ENCODE measurements at regions of chr10 and their contacts with region 1.

Region 1: GRCh38 chr10:70575874-70576802 is 26.4 kb downstream of the PRF1 start:
- DNase-seq: peak; percentile 38
- H3K4me3 Mint-ChIP-seq: no peak overlapping the region
- H3K27ac Mint-ChIP-seq: peak overlapping the region; percentile 26
- H3K4me1 Mint-ChIP-seq: peaks cover 43% of the 10 kb centered on the region
- H3K27me3 Mint-ChIP-seq: no peaks in the 10 kb centered on the region

Region 2: DNA sequence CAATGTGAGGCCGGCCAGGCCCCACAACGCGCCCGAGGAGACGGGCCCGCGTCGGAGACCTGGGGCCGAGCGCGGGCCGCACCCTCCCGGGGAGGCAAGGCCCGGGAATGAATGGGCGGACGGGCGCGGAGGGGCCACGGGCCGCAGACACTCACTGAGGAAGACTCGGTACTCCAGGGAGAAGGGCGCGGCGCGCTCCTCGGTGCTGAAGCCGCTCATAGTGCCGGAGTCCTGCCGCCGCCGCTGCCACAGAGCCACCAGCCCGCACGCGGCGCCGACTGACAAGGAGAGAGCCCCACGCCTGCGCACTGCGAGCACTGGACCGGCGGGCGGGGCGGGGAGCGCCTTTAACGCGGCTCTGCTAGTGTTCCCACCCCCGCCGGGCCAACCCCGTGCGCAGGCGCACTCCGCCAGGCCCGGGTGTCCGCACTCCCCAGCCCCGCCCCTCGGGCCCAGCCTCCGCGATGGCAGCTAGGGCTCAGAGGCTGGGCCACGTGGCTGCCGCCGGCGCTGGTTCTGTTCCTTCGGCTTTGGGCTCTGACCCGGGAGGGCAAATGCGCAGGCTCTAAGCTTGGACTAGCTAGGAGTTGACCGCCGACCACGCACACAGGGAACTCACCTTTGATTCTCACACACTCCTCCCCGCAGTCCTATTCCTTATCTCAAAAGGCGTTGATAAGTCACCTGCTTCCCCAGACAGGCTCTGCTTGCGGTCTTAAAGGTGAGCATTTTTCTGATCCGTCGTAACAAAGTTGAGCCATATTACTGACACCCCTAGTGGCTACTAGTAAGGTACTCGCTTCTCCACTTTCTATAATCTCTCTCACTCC is 342.8 kb before region 1 on chr10 and contains the start of gene PPA1:
- CTCF ChIA-PET with region 1: no interaction called
- POLR2A ChIA-PET with region 1: no interaction called
- intact Hi-C with region 1: loop called (anchors 2 kb)
- DNase-seq: peak; percentile 99
- H3K4me3 Mint-ChIP-seq: peak within 1 kb of the TSS; percentile 85
- H3K27ac Mint-ChIP-seq: peak within 1 kb of the TSS; percentile 97
- H3K4me1 Mint-ChIP-seq: peaks cover 30% of the 10 kb centered on the region
- H3K27me3 Mint-ChIP-seq: peaks cover 2% of the 10 kb centered on the region
- total RNA-seq, gene PPA1: 359 to 368 TPM

Region 3: GRCh38 chr10:70587045-70587658 is 11.0 kb after region 1 on chr10:
- CTCF ChIA-PET with region 1: interaction called, 3 read pairs
- POLR2A ChIA-PET with region 1: no interaction called
- intact Hi-C with region 1: loop called (anchors 1 kb)
- DNase-seq: peak; percentile 20
- H3K4me3 Mint-ChIP-seq: no peak overlapping the region
- H3K27ac Mint-ChIP-seq: peak overlapping the region; percentile 50
- H3K4me1 Mint-ChIP-seq: peaks cover 17% of the 10 kb centered on the region
- H3K27me3 Mint-ChIP-seq: peaks cover 21% of the 10 kb centered on the region

Region 4: GRCh38 chr10:70619271-70620019 is 43.3 kb after region 1 on chr10:
- CTCF ChIA-PET with region 1: no interaction called
- POLR2A ChIA-PET with region 1: no interaction called
- intact Hi-C with region 1: loop called (anchors 1 kb)
- DNase-seq: no peak
- H3K4me3 Mint-ChIP-seq: no peak overlapping the region
- H3K27ac Mint-ChIP-seq: no peak overlapping the region
- H3K4me1 Mint-ChIP-seq: peaks cover 17% of the 10 kb centered on the region
- H3K27me3 Mint-ChIP-seq: peaks cover 9% of the 10 kb centered on the region

Region 5: DNA sequence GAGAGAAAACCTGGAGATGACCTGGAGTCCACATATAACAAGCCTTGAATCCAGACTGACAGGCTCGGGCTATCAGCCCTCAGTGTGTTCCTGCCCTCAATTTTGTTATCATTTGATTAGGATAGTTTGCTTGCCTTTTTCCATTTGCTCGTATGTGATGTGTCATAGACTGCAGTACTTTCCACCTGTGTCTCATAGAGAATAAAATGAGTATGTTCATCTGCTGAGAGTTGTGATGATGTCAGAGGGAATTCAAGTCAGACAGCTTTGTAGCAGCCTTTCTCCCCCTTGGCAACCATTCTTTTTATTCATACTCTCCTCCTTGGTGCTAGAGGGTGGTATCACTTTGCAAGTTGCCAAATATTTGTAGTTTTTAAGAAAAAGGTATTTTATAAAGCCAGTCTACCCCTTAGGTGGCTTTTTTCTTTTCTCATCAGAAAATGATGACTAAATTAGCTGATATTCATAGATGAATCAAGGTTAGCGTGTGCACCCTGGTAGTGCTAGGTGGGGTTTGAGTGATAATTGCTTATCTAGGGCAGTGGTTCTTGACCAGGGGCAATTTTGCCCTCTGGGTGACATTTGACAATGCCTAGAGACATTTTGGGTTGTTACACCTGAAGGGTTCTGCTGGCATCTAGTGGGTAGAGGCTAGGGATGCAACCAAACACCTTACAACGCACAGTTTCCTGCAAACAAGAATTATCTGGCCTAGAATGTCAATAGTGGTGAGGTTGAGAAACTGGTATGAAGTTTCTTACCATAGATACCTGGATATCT is 245.0 kb after region 1 on chr10:
- CTCF ChIA-PET with region 1: no interaction called
- POLR2A ChIA-PET with region 1: no interaction called
- intact Hi-C with region 1: loop called (anchors 1 kb)
- DNase-seq: peak; percentile 38
- H3K4me3 Mint-ChIP-seq: peak overlapping the region; percentile 18
- H3K27ac Mint-ChIP-seq: peak overlapping the region; percentile 92
- H3K4me1 Mint-ChIP-seq: peaks cover 65% of the 10 kb centered on the region
- H3K27me3 Mint-ChIP-seq: no peaks in the 10 kb centered on the region

Region 6: DNA sequence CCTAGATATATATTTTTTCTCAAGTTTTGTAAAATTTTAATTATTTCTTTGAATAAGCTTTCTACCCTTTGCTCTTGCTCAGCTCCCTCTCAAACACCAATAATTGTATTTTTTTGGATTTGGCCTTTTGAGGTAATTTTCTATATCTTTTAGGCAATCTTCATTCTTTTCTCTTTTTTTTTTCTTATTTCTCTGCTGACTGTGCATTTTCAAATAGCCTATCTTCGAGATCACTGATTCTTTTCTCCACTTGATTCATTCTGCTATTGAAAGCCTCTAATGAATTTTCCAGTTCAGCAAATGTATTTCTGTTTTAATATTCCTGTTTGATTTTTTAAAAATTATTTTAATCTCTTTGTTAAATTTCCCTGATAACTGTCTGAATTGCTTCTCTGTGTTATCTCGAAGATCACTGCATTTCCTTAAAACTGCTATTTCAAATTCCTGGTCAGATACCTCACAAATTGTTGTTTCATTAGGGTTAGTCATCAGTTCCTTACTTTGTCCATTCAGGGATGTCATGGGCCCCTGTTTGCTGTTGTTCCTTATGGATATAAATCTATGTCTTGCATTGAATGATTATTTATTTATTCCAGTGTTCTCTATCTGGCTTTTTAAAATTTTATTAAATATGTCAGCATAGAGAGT is 536.1 kb after region 1 on chr10:
- CTCF ChIA-PET with region 1: no interaction called
- POLR2A ChIA-PET with region 1: no interaction called
- intact Hi-C with region 1: no loop called
- DNase-seq: no peak
- H3K4me3 Mint-ChIP-seq: no peak overlapping the region
- H3K27ac Mint-ChIP-seq: no peak overlapping the region
- H3K4me1 Mint-ChIP-seq: no peaks in the 10 kb centered on the region
- H3K27me3 Mint-ChIP-seq: peaks cover 25% of the 10 kb centered on the region

Measured in activated CD4-positive, alpha-beta memory T cell treated with anti-CD3 and anti-CD28 coated beads for 36 hours (primary cell).